Naive thymus-derived CD4-positive, alpha-beta T cell (primary cell): ENCODE measurements at regions of chr15 and their contacts with region 1.

Region 1: GRCh38 chr15:90387537-90388461 is at the start of gene IQGAP1:
- DNase-seq: peak; percentile 91 to 96 (median 94)
- ATAC-seq: peak; percentile 97
- H3K4me3 ChIP-seq: peak within 1 kb of the TSS; percentile 88
- H3K4me3 Mint-ChIP-seq: peak within 1 kb of the TSS; percentile 80 to 95 (median 92)
- H3K27ac ChIP-seq: peak within 1 kb of the TSS; percentile 93
- H3K27ac Mint-ChIP-seq: peak within 1 kb of the TSS; percentile 68 to 99 (median 94)
- H3K4me1 ChIP-seq: peaks cover 29 to 33% of the 10 kb centered on the region in 2 donors
- H3K4me1 Mint-ChIP-seq: peaks cover 38 to 56% (median 50%) of the 10 kb centered on the region in 7 donors
- H3K27me3 ChIP-seq: no peaks in the 10 kb centered on the region
- H3K27me3 Mint-ChIP-seq: no peaks in the 10 kb centered on the region
- total RNA-seq, gene IQGAP1: 81.8 to 263 (median 93.8) TPM

Region 2: DNA sequence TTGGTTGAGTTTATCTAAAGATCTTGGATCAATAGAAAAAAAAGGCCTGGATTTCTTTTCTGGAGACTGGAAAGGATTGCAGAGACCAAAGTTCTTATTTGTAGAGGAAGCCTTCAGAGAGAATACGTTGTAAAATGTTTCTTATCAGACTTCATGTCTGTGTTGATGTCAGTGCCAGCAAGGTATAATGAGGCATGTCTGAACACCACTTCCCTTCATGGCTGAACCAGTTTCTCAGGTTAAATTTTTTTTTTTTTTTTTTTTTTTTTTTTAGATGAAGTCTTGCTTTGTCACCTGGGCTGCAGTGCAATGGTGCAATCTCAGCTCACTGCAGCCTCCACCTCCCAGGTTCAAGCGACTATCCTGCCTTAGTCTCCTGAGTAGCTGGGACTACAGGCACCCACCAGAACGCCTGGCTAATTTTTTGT is 53.5 kb before region 1 on chr15:
- CTCF ChIA-PET with region 1: no interaction called
- POLR2A ChIA-PET with region 1: no interaction called
- intact Hi-C with region 1: no loop called
- DNase-seq: no peak
- ATAC-seq: no peak
- H3K4me3 ChIP-seq: no peak overlapping the region
- H3K4me3 Mint-ChIP-seq: no peak overlapping the region
- H3K27ac ChIP-seq: no peak overlapping the region
- H3K27ac Mint-ChIP-seq: peak overlapping the region in 1 of 9 donors; percentile 18
- H3K4me1 ChIP-seq: peaks cover 0 to 11% of the 10 kb centered on the region in 2 donors
- H3K4me1 Mint-ChIP-seq: peaks cover 8 to 27% (median 19%) of the 10 kb centered on the region in 7 donors
- H3K27me3 ChIP-seq: no peaks in the 10 kb centered on the region
- H3K27me3 Mint-ChIP-seq: no peaks in the 10 kb centered on the region

Region 3: GRCh38 chr15:90352109-90352893 is 35.5 kb before region 1 on chr15 and contains the start of gene ZNF774:
- CTCF ChIA-PET with region 1: no interaction called
- POLR2A ChIA-PET with region 1: interaction called, 3 read pairs
- intact Hi-C with region 1: loop called in 1 of 2 experiments (anchors 1 kb)
- DNase-seq: peak; percentile 74 to 95 (median 93)
- ATAC-seq: peak; percentile 99
- H3K4me3 ChIP-seq: peak within 1 kb of the TSS; percentile 91
- H3K4me3 Mint-ChIP-seq: peak within 1 kb of the TSS; percentile 86 to 92 (median 89)
- H3K27ac ChIP-seq: peak within 1 kb of the TSS; percentile 73
- H3K27ac Mint-ChIP-seq: peak within 1 kb of the TSS in 8 of 9 donors; percentile 8 to 86 (median 66)
- H3K4me1 ChIP-seq: peaks cover 5 to 11% of the 10 kb centered on the region in 2 donors
- H3K4me1 Mint-ChIP-seq: peaks cover 7 to 29% (median 9%) of the 10 kb centered on the region in 7 donors
- H3K27me3 ChIP-seq: no peaks in the 10 kb centered on the region
- H3K27me3 Mint-ChIP-seq: peaks cover 0 to 17% (median 0%) of the 10 kb centered on the region in 5 donors
- total RNA-seq, gene ZNF774: 0.22 to 2.0 (median 1.5) TPM

Region 4: GRCh38 chr15:90376789-90377188 is 11.0 kb before region 1 on chr15:
- CTCF ChIA-PET with region 1: interaction called, 3 read pairs
- POLR2A ChIA-PET with region 1: interaction called, 24 read pairs
- intact Hi-C with region 1: loop called (anchors 1 kb)
- DNase-seq: peak in 8 of 9 donors; percentile 58 to 81 (median 74)
- ATAC-seq: peak; percentile 98
- H3K4me3 ChIP-seq: peak overlapping the region; percentile 11
- H3K4me3 Mint-ChIP-seq: peak overlapping the region; percentile 66 to 87 (median 72)
- H3K27ac ChIP-seq: no peak overlapping the region
- H3K27ac Mint-ChIP-seq: peak overlapping the region; percentile 7 to 92 (median 56)
- H3K4me1 ChIP-seq: peaks cover 32 to 35% of the 10 kb centered on the region in 2 donors
- H3K4me1 Mint-ChIP-seq: peaks cover 24 to 59% (median 48%) of the 10 kb centered on the region in 7 donors
- H3K27me3 ChIP-seq: no peaks in the 10 kb centered on the region
- H3K27me3 Mint-ChIP-seq: no peaks in the 10 kb centered on the region

Region 5: GRCh38 chr15:90419738-90420406 is 32.1 kb after region 1 on chr15:
- CTCF ChIA-PET with region 1: no interaction called
- POLR2A ChIA-PET with region 1: interaction called, 3 read pairs
- intact Hi-C with region 1: loop called in 1 of 2 experiments (anchors 2 kb)
- DNase-seq: no peak
- ATAC-seq: no peak
- H3K4me3 ChIP-seq: no peak overlapping the region
- H3K4me3 Mint-ChIP-seq: peak overlapping the region in 6 of 10 donors; percentile 1 to 70 (median 28)
- H3K27ac ChIP-seq: no peak overlapping the region
- H3K27ac Mint-ChIP-seq: peak overlapping the region in 7 of 9 donors; percentile 1 to 81 (median 21)
- H3K4me1 ChIP-seq: peaks cover 18 to 22% of the 10 kb centered on the region in 2 donors
- H3K4me1 Mint-ChIP-seq: peaks cover 40 to 83% (median 67%) of the 10 kb centered on the region in 7 donors
- H3K27me3 ChIP-seq: no peaks in the 10 kb centered on the region
- H3K27me3 Mint-ChIP-seq: no peaks in the 10 kb centered on the region

Region 6: DNA sequence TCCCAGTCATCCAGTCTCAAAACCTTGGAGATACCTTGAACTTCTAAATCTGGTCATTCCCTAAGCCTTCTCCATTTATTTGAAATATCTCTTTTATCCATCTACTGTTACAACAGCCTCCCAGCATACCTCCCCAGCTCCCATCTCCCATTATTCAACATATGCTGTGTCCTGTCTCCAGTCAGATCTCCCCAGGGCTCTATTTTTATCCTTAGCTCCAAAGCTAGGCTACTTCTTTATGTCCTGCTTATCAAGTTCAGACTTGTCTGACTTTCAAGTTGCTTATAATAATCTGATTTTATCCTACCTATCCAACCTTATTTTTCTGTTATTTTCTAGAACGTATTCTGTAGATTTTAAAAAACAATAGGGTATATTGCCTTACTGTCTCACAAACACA is 44.5 kb after region 1 on chr15:
- CTCF ChIA-PET with region 1: no interaction called
- POLR2A ChIA-PET with region 1: no interaction called
- intact Hi-C with region 1: no loop called
- DNase-seq: no peak
- ATAC-seq: no peak
- H3K4me3 ChIP-seq: no peak overlapping the region
- H3K4me3 Mint-ChIP-seq: no peak overlapping the region
- H3K27ac ChIP-seq: no peak overlapping the region
- H3K27ac Mint-ChIP-seq: peak overlapping the region in 2 of 9 donors; percentile 8 to 21
- H3K4me1 ChIP-seq: peaks cover 0 to 6% of the 10 kb centered on the region in 2 donors
- H3K4me1 Mint-ChIP-seq: peaks cover 10 to 45% (median 39%) of the 10 kb centered on the region in 7 donors
- H3K27me3 ChIP-seq: no peaks in the 10 kb centered on the region
- H3K27me3 Mint-ChIP-seq: no peaks in the 10 kb centered on the region